ENCODE measurements at regions of chr10 and their contacts with region 1.

Region 1: DNA sequence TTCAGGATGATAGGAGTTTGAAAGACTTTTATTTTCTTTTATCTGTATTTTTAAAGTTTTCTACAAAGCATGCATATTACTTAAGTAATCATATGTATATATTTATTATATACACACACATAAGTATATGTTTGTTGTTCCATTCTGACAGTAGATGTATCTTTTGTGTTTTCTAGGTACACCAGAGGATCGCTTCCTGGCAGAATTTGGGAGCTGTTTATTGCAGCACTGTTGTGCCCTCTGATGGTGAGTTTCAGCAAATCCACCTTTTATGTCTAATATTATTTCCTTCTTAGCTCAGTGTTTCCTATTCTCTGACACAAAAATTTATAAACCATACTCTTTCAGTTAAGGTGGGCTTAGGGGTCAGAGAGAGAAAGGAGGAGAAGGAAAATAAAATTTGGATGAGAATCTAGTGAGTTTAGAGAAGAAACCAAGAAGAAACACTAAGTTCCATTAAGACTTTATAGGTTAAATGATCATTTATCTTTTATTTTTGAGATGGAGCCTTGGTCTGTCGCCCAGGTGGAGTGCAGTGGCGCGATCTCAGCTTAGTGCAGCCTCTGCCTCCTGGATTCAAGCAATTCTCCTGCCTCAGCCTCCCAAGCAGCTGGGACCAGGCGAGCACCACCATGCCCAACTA is 59.2 kb upstream of the OIT3 start:
- DNase-seq: peak; percentile 83
- H3K4me3 ChIP-seq: no peak overlapping the region
- H3K27ac ChIP-seq: no peak overlapping the region
- H3K4me1 ChIP-seq: peaks cover 19% of the 10 kb centered on the region
- H3K27me3 ChIP-seq: no peaks in the 10 kb centered on the region

Region 2: DNA sequence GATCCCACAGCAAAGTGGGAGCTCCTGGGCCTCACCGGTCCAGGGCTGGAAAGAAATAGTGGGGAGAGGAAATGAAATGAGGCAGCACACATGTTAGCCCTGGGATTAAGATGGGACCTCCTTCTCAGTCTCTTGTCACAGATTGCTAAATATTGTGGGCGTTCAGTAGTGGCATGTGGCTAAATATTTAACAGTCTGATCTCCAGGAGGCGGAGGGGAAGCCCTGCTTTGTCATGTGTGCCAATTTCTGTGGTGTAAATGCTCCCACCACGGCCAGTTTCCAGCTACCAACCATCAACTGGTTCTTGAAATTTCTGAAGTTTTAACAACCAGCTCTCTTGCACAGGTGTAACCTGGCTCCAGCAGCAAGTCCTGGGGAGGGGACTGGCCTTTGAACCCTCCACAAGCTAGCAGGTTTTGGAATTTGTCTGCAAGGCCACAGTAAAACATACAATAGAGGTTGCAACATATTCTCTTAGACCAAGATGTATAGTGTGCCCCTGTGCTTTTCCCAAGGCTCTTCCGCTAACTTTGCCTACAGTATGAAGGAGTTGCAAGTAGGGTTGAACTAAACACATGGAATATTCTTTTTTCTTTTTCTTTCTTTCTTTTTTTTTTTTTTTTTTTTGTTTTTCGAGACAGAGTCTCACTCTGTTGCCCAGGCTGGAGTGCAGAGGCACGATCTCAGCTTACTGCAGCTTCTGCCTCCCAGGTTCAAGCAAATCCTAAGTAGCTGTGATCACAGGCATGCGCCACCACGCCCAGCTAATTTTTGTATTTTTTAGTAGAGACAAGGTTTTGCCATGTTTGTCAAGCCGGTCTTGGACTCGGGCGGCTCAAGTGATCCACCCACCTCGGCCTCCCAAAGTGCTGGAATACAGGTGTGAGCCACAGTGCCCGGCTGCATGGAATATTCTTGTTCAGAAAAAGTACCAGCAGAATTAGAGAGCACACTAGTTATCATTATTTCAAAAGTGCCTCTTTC is 1842.9 kb before region 1 on chr10:
- in situ Hi-C with region 1: no loop called
- DNase-seq: no peak
- H3K4me3 ChIP-seq: no peak overlapping the region
- H3K27ac ChIP-seq: no peak overlapping the region
- H3K4me1 ChIP-seq: no peaks in the 10 kb centered on the region
- H3K27me3 ChIP-seq: peaks cover 27% of the 10 kb centered on the region

Region 3: DNA sequence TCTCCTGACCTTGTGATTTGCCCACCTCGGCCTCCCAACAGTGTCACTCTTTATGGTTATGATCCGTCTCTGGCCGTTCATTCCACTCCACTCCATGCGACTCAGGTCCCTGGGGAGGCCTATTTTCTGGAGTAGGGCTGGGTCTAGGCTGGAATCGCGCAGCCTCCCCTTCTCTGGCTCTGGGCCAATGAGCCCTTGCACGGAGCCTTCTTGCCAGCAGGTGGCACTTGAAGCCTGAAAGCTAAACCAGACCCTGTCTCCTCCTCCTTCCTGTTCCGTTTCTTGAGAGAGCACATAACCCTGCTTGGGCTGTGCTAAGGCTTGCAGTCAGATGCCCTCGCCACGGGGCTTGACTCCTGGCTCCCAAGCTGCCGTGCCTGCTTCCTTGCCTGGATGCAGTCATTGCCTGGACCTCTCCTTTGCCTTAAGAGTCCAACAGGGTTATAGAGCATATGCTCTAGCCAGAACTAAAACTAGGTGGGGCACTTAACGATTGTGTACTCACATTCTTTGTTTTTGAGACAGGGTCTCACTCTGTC is 470.0 kb before region 1 on chr10:
- in situ Hi-C with region 1: loop called (anchors 10 kb)
- DNase-seq: peak; percentile 96
- H3K4me3 ChIP-seq: peak overlapping the region; percentile 49
- H3K27ac ChIP-seq: peak overlapping the region; percentile 84
- H3K4me1 ChIP-seq: peaks cover 16% of the 10 kb centered on the region
- H3K27me3 ChIP-seq: no peaks in the 10 kb centered on the region

Measured in GM23248 (cell line).